Activated CD8-positive, alpha-beta T cell treated with anti-CD3 and anti-CD28 coated beads, Interleukin-2, amount 10 ng/mL, durations not matched to agents 7 days and 5 days (primary cell): ENCODE measurements at regions of chr11 and their contacts with region 1.

Region 1: DNA sequence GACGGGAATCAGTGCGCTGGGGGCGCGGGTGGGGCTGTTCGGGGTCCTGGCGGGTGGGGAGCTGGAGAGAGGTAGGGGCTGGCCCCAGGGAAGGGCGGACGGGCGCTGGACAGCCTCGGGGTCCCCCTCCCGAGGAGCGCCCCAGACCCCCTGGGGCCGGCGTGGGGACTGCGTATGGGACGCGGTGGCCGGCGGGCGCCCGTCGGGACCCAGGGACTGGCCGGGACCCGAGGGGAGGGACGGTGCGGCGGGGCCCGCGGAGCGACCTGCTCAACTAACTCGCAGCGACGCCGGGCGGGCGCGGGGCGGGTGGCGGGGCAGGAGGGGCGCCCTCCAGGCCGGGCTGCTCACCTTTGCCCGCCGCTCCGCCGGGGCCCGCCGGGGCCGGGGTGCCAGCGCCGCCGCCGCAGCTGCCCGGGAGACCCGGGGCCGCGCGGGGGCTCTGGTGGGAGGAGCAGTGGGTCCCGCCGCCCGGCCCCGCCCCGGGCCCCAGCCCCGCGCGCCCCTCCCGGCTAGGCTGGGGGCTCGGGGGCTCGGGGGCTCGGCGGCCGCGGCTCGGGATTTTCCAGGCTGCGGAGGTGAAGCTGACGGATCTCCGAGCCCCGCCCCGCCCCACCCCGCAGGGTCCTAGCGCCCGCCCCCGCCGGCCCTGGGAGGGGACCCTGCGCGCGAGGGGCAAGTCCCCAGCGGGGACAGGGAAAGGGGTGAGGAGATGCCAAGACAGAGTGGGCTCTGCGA is 12.4 kb downstream of the STARD10 start:
- DNase-seq: peak; percentile 51
- ATAC-seq: peak; percentile 82
- H3K4me3 Mint-ChIP-seq: peak overlapping the region; percentile 67
- H3K27ac Mint-ChIP-seq: no peak overlapping the region
- H3K4me1 Mint-ChIP-seq: peaks cover 20% of the 10 kb centered on the region
- H3K27me3 Mint-ChIP-seq: peaks cover 13% of the 10 kb centered on the region

Region 2: GRCh38 chr11:72814286-72815109 is 33.0 kb after region 1 on chr11 and contains the start of gene ATG16L2:
- CTCF ChIA-PET with region 1: interaction called, 10 read pairs
- POLR2A ChIA-PET with region 1: interaction called, 4 read pairs
- DNase-seq: peak; percentile 88
- ATAC-seq: peak; percentile 74
- H3K4me3 Mint-ChIP-seq: peak within 1 kb of the TSS; percentile 100
- H3K27ac Mint-ChIP-seq: peak within 1 kb of the TSS; percentile 99
- H3K4me1 Mint-ChIP-seq: peaks cover 50% of the 10 kb centered on the region
- H3K27me3 Mint-ChIP-seq: no peaks in the 10 kb centered on the region
- total RNA-seq, gene ATG16L2: 104 to 105 TPM

Region 3: DNA sequence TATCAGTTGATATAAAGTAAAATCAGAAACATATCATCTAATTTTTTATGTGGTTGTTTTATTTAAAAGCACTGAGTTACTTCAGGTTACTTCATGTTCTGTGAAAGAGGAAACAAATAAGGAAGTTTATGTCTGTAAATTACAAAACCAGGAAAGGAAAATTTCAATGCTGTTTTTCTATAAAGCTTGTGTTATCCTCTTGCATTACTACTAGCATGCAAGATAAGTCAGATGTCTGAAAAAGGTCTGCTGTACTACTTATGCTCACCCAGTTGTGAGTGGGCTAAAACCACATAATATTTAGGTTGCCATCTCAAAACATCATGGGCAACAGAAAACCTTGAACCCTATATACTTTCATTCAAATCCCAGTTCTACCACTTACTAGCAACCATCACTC is 154.2 kb after region 1 on chr11:
- CTCF ChIA-PET with region 1: no interaction called
- POLR2A ChIA-PET with region 1: no interaction called
- DNase-seq: no peak
- ATAC-seq: no peak
- H3K4me3 Mint-ChIP-seq: no peak overlapping the region
- H3K27ac Mint-ChIP-seq: no peak overlapping the region
- H3K4me1 Mint-ChIP-seq: no peaks in the 10 kb centered on the region
- H3K27me3 Mint-ChIP-seq: no peaks in the 10 kb centered on the region